Gastrocnemius medialis (tissue), 4 donors: ENCODE measurements at regions of chr6 and their contacts with region 1.

Region 1: DNA sequence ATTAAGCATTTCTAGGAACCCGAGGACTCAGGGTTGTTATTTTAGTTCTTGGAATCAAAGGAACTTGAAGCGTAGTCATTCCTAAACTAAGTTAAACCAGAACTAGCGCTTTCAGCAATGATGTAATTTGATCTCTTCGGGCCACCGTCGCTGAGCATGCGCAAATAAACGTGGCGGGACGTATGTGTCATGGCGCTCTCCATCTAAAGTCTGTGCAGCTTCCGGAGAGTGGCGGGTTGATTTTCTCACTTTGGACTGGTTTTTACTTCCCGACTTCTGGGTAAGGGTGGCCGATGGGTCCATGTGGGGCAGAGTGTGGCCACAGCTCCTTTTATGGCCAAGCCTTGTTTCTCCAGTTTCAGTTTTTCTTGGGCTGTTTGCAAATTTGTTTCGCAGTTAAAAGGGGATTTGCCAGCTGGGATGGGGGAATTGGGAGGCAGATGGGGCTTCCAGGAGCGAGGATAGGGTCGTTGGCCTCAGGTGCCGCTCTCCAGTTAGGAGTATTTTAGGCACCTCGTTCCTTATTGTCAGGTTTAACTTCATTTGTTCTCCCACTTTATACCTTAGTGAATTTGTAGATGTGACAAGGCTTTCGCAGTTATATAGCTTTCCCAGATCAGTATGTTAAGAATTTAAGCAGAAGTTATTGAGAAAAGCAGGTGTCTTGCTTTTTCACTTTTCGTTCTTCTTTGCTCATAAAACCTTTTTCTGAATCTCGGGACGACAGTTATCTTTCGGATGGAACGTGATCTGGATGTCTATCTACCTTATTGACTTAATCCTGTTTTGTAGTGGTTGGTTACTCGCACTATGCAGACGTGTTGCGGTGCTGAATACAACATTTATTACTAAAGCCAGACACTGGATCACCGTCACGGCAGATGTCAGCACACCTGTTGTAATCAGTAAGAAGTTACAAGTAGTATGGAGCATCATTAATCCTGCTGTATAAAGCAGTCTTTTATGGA is at the start of gene CDKAL1:
- DNase-seq: peak; percentile 76 to 86
- ATAC-seq: peak; percentile 92
- H3K4me3 ChIP-seq: peak within 1 kb of the TSS; percentile 68 to 93 (median 88)
- H3K27ac ChIP-seq: peak within 1 kb of the TSS; percentile 82 to 94 (median 88)
- H3K4me1 ChIP-seq: peaks cover 12 to 13% of the 10 kb centered on the region in 2 donors
- H3K27me3 ChIP-seq: no peaks in the 10 kb centered on the region
- CTCF ChIP-seq: no peak
- POLR2A ChIP-seq: peak; percentile 31 to 35
- total RNA-seq, gene CDKAL1: 9.6 to 17.0 (median 11.4) TPM

Region 2: GRCh38 chr6:20092071-20092566 is 442.5 kb before region 1 on chr6:
- in situ Hi-C with region 1: loop called in 3 of 4 experiments (anchors 10 to 25 kb)
- intact Hi-C with region 1: loop called (anchors 10 kb)
- DNase-seq: no peak
- ATAC-seq: peak in 1 of 2 donors; percentile 58
- H3K4me3 ChIP-seq: no peak overlapping the region
- H3K27ac ChIP-seq: no peak overlapping the region
- H3K4me1 ChIP-seq: no peaks in the 10 kb centered on the region
- H3K27me3 ChIP-seq: no peaks in the 10 kb centered on the region
- CTCF ChIP-seq: peak; percentile 51 to 65 (median 61)
- POLR2A ChIP-seq: no peak

Region 3: DNA sequence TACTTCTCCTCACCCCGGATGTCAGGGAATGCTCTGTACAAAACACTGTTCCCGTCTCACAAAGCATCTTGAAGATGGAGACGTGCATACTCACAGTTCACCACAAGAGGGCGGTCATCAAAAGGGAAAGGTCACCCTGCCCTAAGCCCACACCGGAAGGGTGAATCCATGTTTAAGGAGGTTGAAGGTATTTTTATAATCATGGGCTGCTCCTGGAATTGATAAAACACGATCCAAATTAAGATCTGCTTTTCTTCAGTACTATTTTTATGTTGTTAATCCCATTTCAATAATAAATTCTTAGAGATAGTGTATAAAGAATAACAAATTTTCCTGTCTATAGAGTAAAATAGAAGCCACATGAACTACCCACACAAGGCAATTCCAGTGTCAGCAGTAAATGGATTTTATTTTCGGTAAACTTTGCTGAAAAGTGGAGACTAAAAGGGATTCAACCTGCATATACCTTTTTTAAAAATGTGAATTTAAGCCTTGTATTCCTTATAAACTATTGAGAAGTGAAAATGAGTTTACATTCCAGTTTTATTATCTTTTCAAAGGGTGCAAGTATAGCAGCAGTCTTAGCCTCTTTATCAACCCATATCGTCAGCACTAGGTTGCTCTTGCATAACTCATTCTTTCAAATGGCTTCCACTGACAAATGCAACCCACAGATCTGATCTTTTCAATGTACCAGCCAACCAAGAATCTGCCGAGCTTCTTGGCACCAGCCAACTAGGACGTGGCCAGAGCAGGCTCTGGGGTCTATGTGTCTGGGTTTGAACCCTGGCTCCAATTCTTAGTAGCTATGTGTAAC is 242.6 kb before region 1 on chr6:
- in situ Hi-C with region 1: loop called (anchors 5 kb)
- intact Hi-C with region 1: no loop called
- DNase-seq: peak; percentile 43 to 59
- ATAC-seq: peak; percentile 81 to 95
- H3K4me3 ChIP-seq: no peak overlapping the region
- H3K27ac ChIP-seq: no peak overlapping the region
- H3K4me1 ChIP-seq: peaks cover 0 to 3% of the 10 kb centered on the region in 2 donors
- H3K27me3 ChIP-seq: no peaks in the 10 kb centered on the region
- CTCF ChIP-seq: peak; percentile 73 to 89 (median 79)
- POLR2A ChIP-seq: no peak

Region 4: GRCh38 chr6:20306491-20306890 is 228.1 kb before region 1 on chr6:
- in situ Hi-C with region 1: no loop called
- intact Hi-C with region 1: no loop called
- DNase-seq: no peak
- ATAC-seq: no peak
- H3K4me3 ChIP-seq: no peak overlapping the region
- H3K27ac ChIP-seq: no peak overlapping the region
- H3K4me1 ChIP-seq: no peaks in the 10 kb centered on the region
- H3K27me3 ChIP-seq: no peaks in the 10 kb centered on the region
- CTCF ChIP-seq: no peak
- POLR2A ChIP-seq: no peak

Region 5: GRCh38 chr6:20401205-20402091 is 133.1 kb before region 1 on chr6 and contains the start of gene E2F3:
- in situ Hi-C with region 1: loop called (anchors 5 to 10 kb)
- intact Hi-C with region 1: loop called (anchors 2 kb)
- DNase-seq: peak; percentile 100
- ATAC-seq: peak; percentile 90 to 94
- H3K4me3 ChIP-seq: peak within 1 kb of the TSS; percentile 79 to 92 (median 86)
- H3K27ac ChIP-seq: peak within 1 kb of the TSS; percentile 87 to 98 (median 95)
- H3K4me1 ChIP-seq: peaks cover 0 to 9% of the 10 kb centered on the region in 2 donors
- H3K27me3 ChIP-seq: no peaks in the 10 kb centered on the region
- CTCF ChIP-seq: no peak
- POLR2A ChIP-seq: peak; percentile 25 to 42
- total RNA-seq, gene E2F3: 5.4 to 13.6 (median 10.7) TPM

Region 6: DNA sequence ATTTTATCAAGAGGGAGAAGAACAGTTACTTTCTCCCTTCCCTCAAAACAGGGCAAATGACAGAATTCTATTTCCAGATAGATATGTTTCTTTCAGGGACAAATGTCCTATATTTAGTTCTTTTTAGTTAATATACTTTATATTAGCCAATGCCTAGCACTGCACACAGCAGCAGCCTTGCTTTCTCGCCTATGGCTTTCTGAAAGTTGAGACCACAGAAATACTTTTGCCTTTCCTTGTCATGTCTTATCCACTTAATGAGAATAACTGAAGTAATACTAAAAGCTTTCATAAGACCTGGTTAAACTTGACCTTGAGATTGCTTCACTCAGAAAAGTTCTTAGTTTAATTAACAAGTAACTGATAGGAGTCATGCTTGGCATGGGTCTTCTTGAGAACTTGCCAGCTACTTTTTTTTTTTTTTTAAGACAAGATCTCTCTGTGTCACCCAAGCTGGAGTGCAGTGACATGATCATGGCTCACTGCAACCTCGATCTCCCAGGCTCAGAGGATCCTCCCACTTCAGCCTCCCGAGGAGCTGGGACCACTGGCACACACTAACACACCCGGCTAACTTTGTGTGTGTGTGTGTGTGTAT is 159.0 kb after region 1 on chr6:
- in situ Hi-C with region 1: no loop called
- intact Hi-C with region 1: no loop called
- DNase-seq: no peak
- ATAC-seq: no peak
- H3K4me3 ChIP-seq: no peak overlapping the region
- H3K27ac ChIP-seq: no peak overlapping the region
- H3K4me1 ChIP-seq: peaks cover 8% of the 10 kb centered on the region in 2 donors
- H3K27me3 ChIP-seq: no peaks in the 10 kb centered on the region
- CTCF ChIP-seq: no peak
- POLR2A ChIP-seq: no peak